OCI-LY7 (cell line): ENCODE measurements at regions of chr9 and their contacts with region 1.

Region 1: GRCh38 chr9:110623462-110624025 is 44.0 kb upstream of the SVEP1 start:
- DNase-seq: peak; percentile 48
- H3K4me3 ChIP-seq: no peak overlapping the region
- H3K27ac ChIP-seq: no peak overlapping the region
- H3K4me1 ChIP-seq: no peaks in the 10 kb centered on the region
- CTCF ChIP-seq: peak; percentile 87

Region 2: GRCh38 chr9:109574068-109574882 is 1049.3 kb before region 1 on chr9:
- CTCF ChIA-PET with region 1: no interaction called
- POLR2A ChIA-PET with region 1: no interaction called
- intact Hi-C with region 1: loop called (anchors 5 kb)
- DNase-seq: peak; percentile 61
- H3K4me3 ChIP-seq: no peak overlapping the region
- H3K27ac ChIP-seq: no peak overlapping the region
- H3K4me1 ChIP-seq: no peaks in the 10 kb centered on the region
- CTCF ChIP-seq: peak; percentile 86

Region 3: GRCh38 chr9:110183208-110184145 is 440.1 kb before region 1 on chr9:
- CTCF ChIA-PET with region 1: no interaction called
- POLR2A ChIA-PET with region 1: no interaction called
- intact Hi-C with region 1: loop called (anchors 2 kb)
- DNase-seq: peak; percentile 76
- H3K4me3 ChIP-seq: no peak overlapping the region
- H3K27ac ChIP-seq: no peak overlapping the region
- H3K4me1 ChIP-seq: no peaks in the 10 kb centered on the region
- CTCF ChIP-seq: peak; percentile 93

Region 4: GRCh38 chr9:110427497-110428104 is 195.9 kb before region 1 on chr9:
- CTCF ChIA-PET with region 1: no interaction called
- POLR2A ChIA-PET with region 1: no interaction called
- intact Hi-C with region 1: loop called (anchors 5 kb)
- DNase-seq: peak; percentile 29
- H3K4me3 ChIP-seq: no peak overlapping the region
- H3K27ac ChIP-seq: no peak overlapping the region
- H3K4me1 ChIP-seq: no peaks in the 10 kb centered on the region
- CTCF ChIP-seq: peak; percentile 90